GM13977 (cell line): ENCODE measurements at regions of chr1 and their contacts with region 1.

Region 1: DNA sequence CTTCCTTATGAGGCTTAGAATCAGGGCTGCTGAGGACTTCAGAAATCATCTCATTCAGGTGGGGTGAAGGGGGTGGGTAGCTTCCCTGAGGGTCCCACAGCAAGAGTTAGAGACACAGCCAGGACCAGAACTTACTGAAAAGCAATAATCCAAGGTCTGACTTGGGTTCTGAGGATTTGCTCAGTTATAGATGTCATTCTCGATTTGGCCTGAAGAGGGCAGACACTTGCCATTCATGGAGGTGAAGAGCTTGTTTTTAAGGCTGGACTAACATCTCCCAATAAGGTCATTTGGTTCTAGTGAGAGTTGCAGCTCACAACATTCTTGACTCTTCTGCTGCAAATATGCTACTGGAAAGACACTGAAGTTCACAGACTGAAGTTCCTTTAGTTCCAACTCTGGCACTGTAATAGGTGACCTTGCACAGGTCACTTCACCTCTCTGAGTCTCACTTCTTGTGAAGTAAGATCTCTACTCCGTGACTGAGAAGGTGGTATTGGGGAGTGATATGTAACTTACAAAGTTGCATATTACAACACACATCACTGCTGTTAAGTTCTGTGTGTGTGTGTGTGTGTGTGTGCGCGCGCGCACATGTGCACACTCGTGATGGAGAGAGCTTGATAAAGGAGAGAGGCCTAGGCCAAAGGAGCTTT is 69.8 kb upstream of the DIRAS3 start:
- DNase-seq: peak; percentile 51
- CTCF ChIP-seq: peak; percentile 85

Region 2: DNA sequence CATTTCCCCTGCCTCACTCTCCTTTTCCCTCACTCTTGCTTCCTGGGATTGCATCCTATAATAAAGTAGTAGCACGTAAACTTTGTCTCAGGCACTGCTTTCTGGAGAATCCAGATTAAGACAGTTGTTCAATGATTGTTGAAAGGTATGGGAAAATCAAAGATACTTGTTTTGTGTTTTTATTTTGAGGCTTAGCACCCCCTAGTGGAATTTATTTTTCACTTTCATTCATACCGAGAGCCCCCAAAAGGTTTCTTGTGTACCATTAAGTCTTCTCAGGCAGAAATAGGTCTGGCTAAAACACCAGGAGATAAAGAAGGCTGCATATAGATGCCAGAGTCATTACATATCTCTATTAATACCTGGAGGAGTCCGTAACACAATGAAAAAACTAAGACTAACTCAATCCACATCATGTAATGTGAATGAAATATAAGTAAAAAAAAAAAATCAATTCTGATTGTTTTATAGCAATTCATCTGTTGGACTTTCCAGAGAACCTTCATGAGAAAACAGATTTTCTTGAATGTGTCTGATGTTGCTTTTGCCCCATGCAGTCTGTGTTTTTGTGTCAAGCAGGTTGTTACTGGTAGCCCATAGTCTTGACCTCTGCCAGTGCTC is 226.0 kb after region 1 on chr1:
- in situ Hi-C with region 1: loop called (anchors 25 kb)
- DNase-seq: peak; percentile 20
- CTCF ChIP-seq: peak; percentile 39

Region 3: DNA sequence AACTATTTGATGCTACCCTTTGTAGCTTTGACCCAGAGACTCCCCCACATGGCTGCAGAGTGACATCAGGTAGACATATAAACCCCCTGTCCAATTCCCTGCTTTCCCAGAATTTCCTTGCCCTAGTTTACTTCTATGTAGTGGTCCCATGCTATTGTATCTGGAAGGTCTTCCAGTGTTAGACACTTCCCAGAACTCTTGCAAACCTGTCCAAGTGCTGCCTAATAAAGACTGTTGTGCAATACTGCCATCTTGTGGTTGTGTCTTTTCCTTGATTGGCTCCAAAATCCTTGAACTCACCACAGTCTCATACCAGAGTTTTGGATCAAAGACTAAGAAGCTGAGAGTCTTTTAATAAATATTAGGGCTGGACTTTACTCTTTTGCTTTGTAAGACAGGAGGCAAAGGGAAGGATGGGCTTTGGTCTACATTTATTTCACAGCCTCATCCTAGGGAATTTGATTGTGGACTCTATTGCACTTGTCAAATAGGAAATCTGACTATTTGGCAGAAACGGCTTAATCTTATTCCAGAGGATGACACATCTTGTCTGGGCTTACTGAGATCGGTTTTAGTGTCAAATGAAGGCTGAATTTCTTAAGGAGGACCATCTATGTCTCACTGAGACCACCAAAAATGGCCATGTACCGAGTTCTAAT is 1617.4 kb after region 1 on chr1:
- in situ Hi-C with region 1: loop called (anchors 25 kb)
- DNase-seq: peak; percentile 12
- CTCF ChIP-seq: peak; percentile 76